Left cardiac atrium (tissue), 4 donors: ENCODE measurements at regions of chr17 and their contacts with region 1.

Region 1: DNA sequence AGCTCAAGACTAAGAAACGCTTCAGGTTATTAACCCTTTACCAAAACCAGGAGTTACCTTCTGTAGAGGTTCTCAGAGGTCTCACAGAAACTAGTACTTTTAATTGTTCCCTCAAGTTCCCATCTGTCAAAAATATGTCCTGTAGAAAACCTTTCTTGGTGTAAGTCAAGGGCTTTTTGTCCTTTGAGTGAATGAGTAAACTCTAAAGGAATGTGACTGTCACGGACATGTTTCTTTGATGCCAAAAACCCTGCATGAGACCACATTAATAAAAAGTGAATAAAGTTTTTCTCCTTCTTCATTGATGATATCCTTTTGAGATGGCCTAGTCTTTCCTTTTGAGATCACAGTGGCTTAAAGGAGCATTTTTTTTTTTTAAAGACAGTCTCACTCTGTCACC is 102.9 kb downstream of the NLK start:
- DNase-seq: no peak
- ATAC-seq: no peak

Region 2: GRCh38 chr17:27892866-27893769 is 252.2 kb before region 1 on chr17 and contains the start of gene LYRM9:
- intact Hi-C with region 1: loop called in 1 of 2 experiments (anchors 10 kb)
- DNase-seq: peak; percentile 94
- ATAC-seq: peak; percentile 100
- total RNA-seq, gene LYRM9: 5.7 to 8.7 TPM

Region 3: DNA sequence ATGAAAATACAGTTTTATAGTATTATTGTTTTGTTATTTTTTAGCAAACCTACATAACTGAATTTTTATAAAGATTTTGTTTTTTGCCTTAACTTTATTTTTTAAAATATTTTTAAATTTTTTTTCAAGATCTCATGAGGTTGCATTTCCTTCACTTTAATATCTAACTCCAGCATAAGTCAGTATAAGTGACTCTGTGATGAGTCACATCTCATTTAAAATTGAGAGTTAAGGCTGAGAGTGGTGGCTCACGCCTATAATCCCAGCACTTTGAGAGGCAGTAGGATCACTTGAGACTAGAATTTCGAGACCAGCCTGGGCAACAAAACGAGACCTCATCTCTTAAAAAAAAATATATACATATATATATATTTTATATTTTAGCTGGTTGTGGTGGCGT is 58.8 kb before region 1 on chr17:
- intact Hi-C with region 1: no loop called
- DNase-seq: no peak
- ATAC-seq: no peak

Region 4: GRCh38 chr17:28306954-28307401 is 161.6 kb after region 1 on chr17:
- intact Hi-C with region 1: no loop called
- DNase-seq: no peak
- ATAC-seq: no peak